Lower leg skin (tissue), 4 donors: ENCODE measurements at regions of chr20 and their contacts with region 1.

Region 1: DNA sequence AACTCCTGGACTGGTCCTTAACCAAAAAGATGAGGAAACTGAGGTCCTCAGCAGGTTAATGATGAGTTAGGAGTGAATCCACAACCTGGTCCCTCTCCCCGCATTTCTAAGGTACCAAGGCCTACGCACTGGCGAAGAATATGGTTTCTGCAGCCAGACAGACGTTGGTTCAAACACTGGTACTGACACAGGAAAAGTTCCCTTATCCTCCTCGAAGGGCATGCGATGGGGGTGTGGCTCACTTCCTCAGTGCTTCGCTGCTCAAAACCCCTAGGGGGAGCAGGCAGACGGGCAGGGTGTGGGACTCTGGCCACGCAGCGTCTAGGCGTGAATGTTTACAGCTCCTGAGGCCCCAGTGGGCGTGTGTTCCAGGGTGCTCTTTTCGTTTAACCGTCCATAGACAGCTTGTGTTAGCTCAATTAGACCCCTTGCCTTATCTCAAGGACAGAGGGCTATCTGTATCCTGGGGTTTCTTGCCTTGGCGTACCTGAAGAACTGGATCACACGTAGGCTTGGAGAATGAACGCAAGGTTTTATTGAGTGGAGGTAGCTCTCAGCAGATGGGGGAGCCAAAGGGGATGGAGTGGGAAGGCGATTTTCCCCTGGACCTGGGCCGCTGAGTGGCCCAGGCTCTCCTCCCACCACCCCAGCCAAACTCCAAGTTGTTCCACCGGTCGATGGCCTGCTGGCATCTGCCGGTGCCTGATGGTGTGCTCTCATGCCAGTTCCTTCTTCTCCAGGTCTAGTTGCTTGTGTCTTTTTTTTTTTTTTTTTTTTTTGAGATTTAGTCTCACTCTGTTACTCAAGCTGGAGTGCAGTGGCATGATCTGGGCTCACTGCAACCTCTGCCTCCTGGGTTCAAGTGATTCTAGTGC is 31.8 kb upstream of the PTPN1 start:
- DNase-seq: peak; percentile 72 to 92
- H3K4me3 ChIP-seq: no peak overlapping the region
- CTCF ChIP-seq: peak in 1 of 3 donors; percentile 60
- POLR2A ChIP-seq: no peak

Region 2: DNA sequence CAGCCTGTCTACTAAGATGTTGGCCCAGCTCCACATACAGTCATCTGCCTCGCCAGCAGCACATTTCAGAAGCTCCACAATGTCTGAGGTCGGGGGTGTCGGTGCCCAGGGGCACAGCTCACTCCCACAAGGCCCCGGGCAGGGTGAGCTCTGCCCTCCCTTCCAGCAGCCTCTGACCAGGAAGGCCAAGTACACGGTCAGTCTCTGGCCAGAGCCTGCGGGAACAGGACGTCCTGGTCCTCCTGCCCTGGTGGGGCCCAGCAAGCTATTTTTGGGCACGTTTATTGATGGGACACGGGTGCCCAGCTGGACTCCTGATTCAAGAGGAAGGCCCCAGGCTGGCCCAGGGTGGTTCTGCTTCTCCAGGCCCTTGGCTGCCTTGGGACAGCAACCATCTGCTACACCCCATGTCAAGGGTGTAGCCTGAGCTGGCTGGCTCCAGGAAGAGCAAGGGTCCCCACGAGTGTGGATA is 83.1 kb before region 1 on chr20:
- intact Hi-C with region 1: no loop called
- DNase-seq: peak; percentile 80 to 95
- H3K4me3 ChIP-seq: no peak overlapping the region
- CTCF ChIP-seq: no peak
- POLR2A ChIP-seq: no peak

Region 3: GRCh38 chr20:50588034-50588611 is 109.7 kb after region 1 on chr20:
- intact Hi-C with region 1: loop called (anchors 10 kb)
- DNase-seq: peak in 1 of 2 donors; percentile 56
- H3K4me3 ChIP-seq: no peak overlapping the region
- CTCF ChIP-seq: peak in 1 of 3 donors; percentile 83
- POLR2A ChIP-seq: no peak